HEK293 (cell line): ENCODE measurements at regions of chr22 and their contacts with region 1.

Region 1: DNA sequence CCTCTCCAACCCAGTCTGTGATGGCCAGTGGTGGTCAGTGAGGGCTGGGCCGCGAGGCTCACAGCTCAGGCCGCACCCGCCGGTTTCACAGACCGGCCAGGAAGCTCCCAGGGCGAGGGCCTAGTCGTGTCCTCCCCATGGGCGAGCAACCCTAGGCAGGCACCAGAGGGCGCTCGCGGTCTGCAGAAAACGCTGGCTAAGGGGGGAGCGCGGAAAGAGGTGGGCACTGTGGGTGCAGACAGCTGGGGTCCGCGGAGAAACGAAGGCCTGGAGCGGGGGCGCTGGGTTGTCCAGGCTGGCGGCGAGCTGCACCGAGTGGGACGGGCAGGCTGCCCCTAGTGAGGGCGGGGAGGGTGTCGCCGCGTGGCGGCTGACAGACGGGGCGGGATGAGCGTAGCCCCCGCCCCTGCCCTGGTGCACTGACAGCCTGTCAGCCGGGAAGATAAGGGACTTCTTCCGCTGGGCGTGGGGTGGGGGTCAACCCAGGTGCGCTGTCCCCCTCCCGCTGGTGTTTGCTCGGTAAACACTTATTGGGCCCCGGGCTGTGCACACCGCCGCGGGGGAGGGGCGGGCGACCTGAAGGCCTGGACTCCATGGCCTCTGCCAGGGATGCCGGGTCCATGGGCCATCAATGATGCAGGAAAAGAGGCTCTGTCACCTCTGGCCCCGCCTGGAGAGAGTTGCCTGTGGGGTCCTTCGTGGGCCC is 7.5 kb downstream of the GP1BB start:
- H3K4me3 ChIP-seq: peak overlapping the region; percentile 38
- H3K27ac ChIP-seq: no peak overlapping the region
- H3K4me1 ChIP-seq: no peaks in the 10 kb centered on the region
- CTCF ChIP-seq: peak; percentile 99

Region 2: DNA sequence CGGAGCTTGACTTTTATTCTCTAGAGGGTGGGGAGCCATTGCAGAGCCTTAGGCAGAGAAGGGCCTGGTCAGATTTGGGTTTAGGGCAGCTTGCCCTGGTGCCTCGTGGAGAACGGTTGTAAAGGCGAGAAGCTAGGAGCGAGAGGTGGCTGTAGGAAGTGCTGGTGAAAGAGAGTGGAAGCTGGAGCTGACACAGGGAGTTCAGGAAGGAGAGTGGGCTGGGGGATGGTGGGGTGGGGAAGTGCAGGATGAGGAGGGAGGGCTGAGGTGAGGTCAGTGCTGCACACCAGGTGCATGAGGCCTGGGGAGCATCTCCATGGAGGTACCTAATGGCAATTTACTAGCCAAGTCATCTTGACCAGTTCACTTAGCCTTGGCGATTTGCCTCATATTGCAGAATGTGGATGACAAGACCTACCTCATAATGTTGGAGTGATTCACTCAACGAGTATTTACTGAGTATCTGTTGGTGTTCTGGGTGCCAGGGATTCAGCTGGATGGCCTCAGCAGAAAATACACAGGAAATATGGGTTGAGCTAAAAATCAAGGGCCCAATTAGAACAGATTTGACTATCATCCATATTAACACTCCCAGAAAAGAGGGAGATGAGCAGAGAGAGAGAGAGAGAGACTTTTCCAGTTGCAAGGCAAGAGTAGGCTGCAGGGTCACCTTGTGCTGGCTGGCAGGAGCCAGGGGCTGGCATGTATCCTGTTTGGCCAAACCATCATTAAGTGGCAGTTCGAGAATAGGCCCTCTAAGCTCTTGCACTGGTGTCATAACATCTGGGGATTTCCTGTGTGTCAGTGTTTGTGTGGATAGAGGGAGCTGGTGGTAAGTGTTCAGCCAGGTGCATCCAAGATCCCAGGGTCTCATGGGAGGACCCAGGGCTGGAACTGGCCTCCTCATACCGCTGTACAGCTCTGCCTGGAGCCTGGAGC is 162.2 kb before region 1 on chr22:
- CTCF ChIA-PET with region 1: no interaction called
- POLR2A ChIA-PET with region 1: no interaction called
- H3K4me3 ChIP-seq: no peak overlapping the region
- H3K27ac ChIP-seq: no peak overlapping the region
- H3K4me1 ChIP-seq: no peaks in the 10 kb centered on the region
- CTCF ChIP-seq: no peak

Region 3: GRCh38 chr22:19756288-19757128 is 25.7 kb after region 1 on chr22:
- CTCF ChIA-PET with region 1: interaction called, 42 read pairs
- POLR2A ChIA-PET with region 1: interaction called, 6 read pairs
- H3K4me3 ChIP-seq: peak overlapping the region; percentile 23
- H3K27ac ChIP-seq: no peak overlapping the region; the same call in 1 of the 2 replicates
- H3K4me1 ChIP-seq: no peaks in the 10 kb centered on the region
- CTCF ChIP-seq: peak; percentile 94

Region 4: DNA sequence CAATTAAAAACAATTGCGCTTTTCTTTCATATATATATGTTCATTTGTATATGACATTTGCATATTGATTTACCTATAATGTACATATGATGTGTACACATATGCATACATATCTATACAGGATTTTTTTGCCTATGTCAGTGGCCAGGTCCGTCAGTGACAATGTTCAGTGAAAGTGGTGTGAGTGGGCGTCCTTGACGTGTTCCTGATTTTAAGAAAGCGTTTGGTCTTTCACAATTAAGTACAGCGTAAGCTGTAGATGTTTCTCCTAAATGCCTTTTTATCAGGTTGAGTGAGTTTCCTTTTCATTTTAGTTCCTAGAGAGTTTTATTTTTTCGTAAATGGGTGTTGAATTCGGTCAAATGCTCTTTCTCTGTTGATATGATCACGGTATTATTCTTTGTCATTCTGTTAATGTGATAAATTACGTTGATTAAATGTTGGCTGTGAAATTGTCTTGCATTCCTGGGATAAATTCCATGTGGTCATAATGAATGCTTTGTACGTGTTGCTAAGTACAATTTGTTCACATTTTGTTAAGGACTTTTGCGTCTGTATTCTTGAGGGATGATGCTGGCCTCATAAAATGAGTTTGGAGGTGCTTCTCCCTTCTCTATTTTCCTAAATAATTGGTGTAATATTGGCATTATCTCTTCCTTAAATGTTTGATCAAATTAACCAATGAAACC is 134.5 kb after region 1 on chr22:
- CTCF ChIA-PET with region 1: interaction called, 10 read pairs
- POLR2A ChIA-PET with region 1: no interaction called
- H3K4me3 ChIP-seq: no peak overlapping the region
- H3K27ac ChIP-seq: no peak overlapping the region
- H3K4me1 ChIP-seq: no peaks in the 10 kb centered on the region
- CTCF ChIP-seq: no peak

Region 5: DNA sequence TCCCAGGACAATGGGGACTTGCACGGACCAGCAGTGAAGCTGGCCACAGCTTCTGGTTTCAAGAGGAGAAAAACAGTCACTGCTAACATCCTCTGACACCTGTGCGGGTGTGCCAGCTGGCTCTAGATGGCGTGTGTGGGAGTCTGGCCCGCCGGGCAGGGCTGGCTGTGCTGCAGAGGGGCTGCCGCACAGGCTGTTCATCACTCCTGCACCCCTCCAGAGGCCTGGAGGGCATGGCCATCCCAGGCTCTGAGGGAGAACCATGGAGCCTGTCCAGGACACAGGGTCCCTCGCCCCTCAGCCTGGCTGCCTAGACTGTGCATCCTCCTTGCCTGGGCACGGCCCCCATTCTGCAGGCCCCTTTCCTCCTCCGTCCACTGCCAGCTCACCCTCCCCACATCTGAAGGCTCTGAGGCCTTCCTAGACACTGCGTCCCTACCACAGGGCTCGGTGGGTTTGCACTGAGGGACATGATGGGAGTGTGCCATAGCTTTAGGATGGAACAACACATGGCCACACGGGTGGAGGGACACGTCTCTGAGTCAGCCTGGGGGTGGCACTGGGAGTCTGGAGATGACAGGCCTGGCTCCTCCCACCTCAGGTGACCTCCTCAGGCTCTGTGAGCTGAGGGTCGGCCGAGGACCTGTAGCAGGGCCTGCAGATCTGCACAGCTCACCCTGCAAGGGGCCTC is 166.0 kb after region 1 on chr22:
- CTCF ChIA-PET with region 1: interaction called, 11 read pairs
- POLR2A ChIA-PET with region 1: no interaction called
- H3K4me3 ChIP-seq: no peak overlapping the region
- H3K27ac ChIP-seq: no peak overlapping the region
- H3K4me1 ChIP-seq: peaks cover 4% of the 10 kb centered on the region
- CTCF ChIP-seq: 0 out of 2 replicates have a peak, but pooled peaks have one; percentile 16

Region 6: GRCh38 chr22:19923914-19924513 is 193.2 kb after region 1 on chr22:
- CTCF ChIA-PET with region 1: interaction called, 16 read pairs
- POLR2A ChIA-PET with region 1: no interaction called
- H3K4me3 ChIP-seq: no peak overlapping the region
- H3K27ac ChIP-seq: no peak overlapping the region
- H3K4me1 ChIP-seq: no peaks in the 10 kb centered on the region
- CTCF ChIP-seq: no peak

Region 7: GRCh38 chr22:20549232-20549841 is 818.5 kb after region 1 on chr22:
- CTCF ChIA-PET with region 1: no interaction called
- POLR2A ChIA-PET with region 1: no interaction called
- H3K4me3 ChIP-seq: no peak overlapping the region
- H3K27ac ChIP-seq: no peak overlapping the region
- H3K4me1 ChIP-seq: peaks cover 11% of the 10 kb centered on the region
- CTCF ChIP-seq: no peak